Caco-2 (cell line): ENCODE measurements at regions of chr10 and their contacts with region 1.

Region 1: DNA sequence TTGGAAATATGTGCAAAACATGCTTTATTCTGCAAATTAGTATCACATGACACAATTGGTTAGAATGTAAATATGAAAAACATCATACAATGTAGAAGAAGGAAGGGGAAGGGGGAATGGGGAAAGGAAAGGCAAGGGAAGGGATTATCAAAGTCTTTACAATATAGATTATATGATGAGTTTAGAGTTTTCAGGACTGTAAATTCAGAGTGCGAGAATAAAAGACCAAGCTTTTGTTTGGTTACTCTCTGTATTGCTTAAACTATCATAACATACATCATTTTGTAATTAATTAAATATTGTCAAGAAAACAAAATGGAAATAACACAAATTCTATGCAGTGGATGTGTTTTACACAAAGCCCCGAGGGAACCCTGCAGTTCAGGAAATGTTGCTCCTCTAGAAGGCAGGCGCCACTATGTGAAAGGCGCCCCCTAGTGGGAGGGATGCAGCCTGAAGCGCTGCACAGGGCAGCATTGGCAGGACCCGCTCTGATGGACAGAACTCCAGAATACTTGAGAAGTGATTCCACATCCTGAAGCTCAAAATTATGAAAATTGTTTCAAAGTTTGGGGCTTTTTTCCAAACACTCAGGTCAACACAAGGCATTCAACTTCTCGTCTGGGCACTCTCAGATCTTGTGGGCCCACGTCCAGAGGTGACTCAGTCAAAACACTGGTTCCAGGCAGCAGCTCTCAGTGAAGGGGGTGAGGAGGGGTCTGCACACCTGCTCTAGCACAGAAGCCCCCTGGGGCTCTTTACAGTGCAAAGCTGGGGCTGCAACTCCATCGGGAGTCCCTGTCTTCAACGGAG is 31.6 kb upstream of the TMEM254 start:
- DNase-seq: peak; percentile 71 to 86
- H3K4me3 ChIP-seq: no peak overlapping the region
- H3K4me3 Mint-ChIP-seq: no peak overlapping the region
- H3K27ac Mint-ChIP-seq: no peak overlapping the region
- H3K4me1 ChIP-seq: no peaks in the 10 kb centered on the region
- H3K4me1 Mint-ChIP-seq: no peaks in the 10 kb centered on the region
- H3K27me3 ChIP-seq: no peaks in the 10 kb centered on the region
- H3K27me3 Mint-ChIP-seq: no peaks in the 10 kb centered on the region
- CTCF ChIP-seq: peak; percentile 93 to 94

Region 2: DNA sequence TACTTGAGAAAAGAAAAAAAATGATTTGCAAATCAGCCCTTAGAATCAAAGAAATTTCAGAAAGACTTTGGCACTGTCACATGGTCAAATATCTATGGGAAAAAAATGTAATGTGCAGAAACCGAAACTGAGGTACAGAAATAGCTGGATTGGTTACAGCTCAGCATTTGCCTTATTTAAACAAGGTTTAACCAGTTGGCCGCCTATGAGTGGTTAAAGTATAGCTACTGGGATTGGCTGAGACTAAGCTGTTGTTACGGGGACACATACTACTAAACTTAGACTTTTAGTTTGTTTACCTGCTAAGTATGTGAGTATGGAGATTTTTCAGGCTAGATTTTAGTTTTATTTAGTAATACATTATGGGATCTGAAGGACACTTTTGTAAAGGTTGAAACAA is 136.5 kb before region 1 on chr10:
- CTCF ChIA-PET with region 1: interaction called, 4 read pairs
- POLR2A ChIA-PET with region 1: no interaction called
- intact Hi-C with region 1: loop called (anchors 1 kb)
- DNase-seq: no peak
- H3K4me3 ChIP-seq: no peak overlapping the region
- H3K4me3 Mint-ChIP-seq: no peak overlapping the region
- H3K27ac Mint-ChIP-seq: no peak overlapping the region
- H3K4me1 ChIP-seq: no peaks in the 10 kb centered on the region
- H3K4me1 Mint-ChIP-seq: peaks cover 3% of the 10 kb centered on the region
- H3K27me3 ChIP-seq: no peaks in the 10 kb centered on the region
- H3K27me3 Mint-ChIP-seq: peaks cover 19% of the 10 kb centered on the region
- CTCF ChIP-seq: no peak

Region 3: DNA sequence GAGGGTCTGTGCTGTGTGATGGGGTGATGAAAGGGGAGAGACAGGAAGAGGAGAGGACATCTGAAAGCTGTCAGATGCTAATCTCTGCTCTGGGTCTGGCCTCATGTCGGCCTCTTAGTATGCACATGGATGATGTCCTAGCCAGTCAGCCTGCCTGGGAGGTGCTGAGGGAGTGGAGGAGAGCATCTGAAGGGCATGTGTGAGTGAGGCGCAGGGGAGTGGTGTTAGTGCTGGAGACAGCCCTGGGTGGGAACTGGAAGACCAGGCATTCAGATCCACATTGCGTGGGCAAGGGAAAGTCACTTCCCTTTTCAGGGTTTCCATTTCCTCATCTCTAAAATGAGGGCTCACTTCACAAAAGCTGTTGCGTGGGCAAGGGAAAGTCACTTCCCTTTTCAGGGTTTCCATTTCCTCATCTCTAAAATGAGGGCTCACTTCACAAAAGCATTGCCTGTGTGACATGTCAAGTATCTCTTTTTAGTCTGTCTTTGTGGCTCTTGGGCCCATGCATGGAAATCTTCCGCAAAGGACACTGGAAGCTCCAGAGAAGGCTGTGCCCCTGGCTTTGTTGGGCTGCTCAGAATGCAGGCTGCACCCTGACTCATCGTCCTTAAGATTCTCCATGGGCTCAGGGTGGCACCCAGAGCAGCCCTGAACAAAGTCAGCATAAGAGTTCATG is 108.0 kb before region 1 on chr10:
- CTCF ChIA-PET with region 1: no interaction called
- POLR2A ChIA-PET with region 1: no interaction called
- intact Hi-C with region 1: loop called (anchors 5 kb)
- DNase-seq: no peak
- H3K4me3 ChIP-seq: no peak overlapping the region
- H3K4me3 Mint-ChIP-seq: no peak overlapping the region
- H3K27ac Mint-ChIP-seq: no peak overlapping the region
- H3K4me1 ChIP-seq: peaks cover 9% of the 10 kb centered on the region
- H3K4me1 Mint-ChIP-seq: peaks cover 4% of the 10 kb centered on the region
- H3K27me3 ChIP-seq: no peaks in the 10 kb centered on the region
- H3K27me3 Mint-ChIP-seq: peaks cover 4% of the 10 kb centered on the region
- CTCF ChIP-seq: no peak

Region 4: GRCh38 chr10:79970062-79970461 is 76.8 kb before region 1 on chr10:
- CTCF ChIA-PET with region 1: no interaction called
- POLR2A ChIA-PET with region 1: no interaction called
- intact Hi-C with region 1: no loop called
- DNase-seq: no peak
- H3K4me3 ChIP-seq: no peak overlapping the region
- H3K4me3 Mint-ChIP-seq: no peak overlapping the region
- H3K27ac Mint-ChIP-seq: no peak overlapping the region
- H3K4me1 ChIP-seq: no peaks in the 10 kb centered on the region
- H3K4me1 Mint-ChIP-seq: no peaks in the 10 kb centered on the region
- H3K27me3 ChIP-seq: no peaks in the 10 kb centered on the region
- H3K27me3 Mint-ChIP-seq: peaks cover 11% of the 10 kb centered on the region
- CTCF ChIP-seq: no peak

Region 5: GRCh38 chr10:79981450-79982361 is 65.1 kb before region 1 on chr10:
- CTCF ChIA-PET with region 1: interaction called, 5 read pairs
- POLR2A ChIA-PET with region 1: no interaction called
- intact Hi-C with region 1: loop called (anchors 1 kb)
- DNase-seq: peak; percentile 45 to 71
- H3K4me3 ChIP-seq: peak overlapping the region; percentile 82
- H3K4me3 Mint-ChIP-seq: peak overlapping the region; percentile 82
- H3K27ac Mint-ChIP-seq: no peak overlapping the region
- H3K4me1 ChIP-seq: peaks cover 5% of the 10 kb centered on the region; the same call in 1 of the 2 replicates
- H3K4me1 Mint-ChIP-seq: peaks cover 8% of the 10 kb centered on the region
- H3K27me3 ChIP-seq: no peaks in the 10 kb centered on the region
- H3K27me3 Mint-ChIP-seq: peaks cover 22% of the 10 kb centered on the region
- CTCF ChIP-seq: peak in 1 of 2 experiments; percentile 30